A549 (cell line): ENCODE measurements at regions of chr4 and their contacts with region 1.

Region 1: GRCh38 chr4:7067452-7068278 is at the start of gene GRPEL1:
- DNase-seq: peak; percentile 83 to 98
- ATAC-seq: peak; percentile 94 to 97
- H3K4me3 ChIP-seq: peak within 1 kb of the TSS; percentile 83
- H3K27ac ChIP-seq: peak within 1 kb of the TSS; percentile 86 to 97
- H3K4me1 ChIP-seq: peaks cover 19% of the 10 kb centered on the region; the same call in 2 of the 3 replicates
- CTCF ChIP-seq: no peak
- EP300 ChIP-seq: no peak
- POLR2A ChIP-seq: peak; percentile 98
- RAD21 ChIP-seq: no peak
- polyA plus RNA-seq, gene GRPEL1: 50.9 and 72.0 TPM in 2 replicates

Region 2: DNA sequence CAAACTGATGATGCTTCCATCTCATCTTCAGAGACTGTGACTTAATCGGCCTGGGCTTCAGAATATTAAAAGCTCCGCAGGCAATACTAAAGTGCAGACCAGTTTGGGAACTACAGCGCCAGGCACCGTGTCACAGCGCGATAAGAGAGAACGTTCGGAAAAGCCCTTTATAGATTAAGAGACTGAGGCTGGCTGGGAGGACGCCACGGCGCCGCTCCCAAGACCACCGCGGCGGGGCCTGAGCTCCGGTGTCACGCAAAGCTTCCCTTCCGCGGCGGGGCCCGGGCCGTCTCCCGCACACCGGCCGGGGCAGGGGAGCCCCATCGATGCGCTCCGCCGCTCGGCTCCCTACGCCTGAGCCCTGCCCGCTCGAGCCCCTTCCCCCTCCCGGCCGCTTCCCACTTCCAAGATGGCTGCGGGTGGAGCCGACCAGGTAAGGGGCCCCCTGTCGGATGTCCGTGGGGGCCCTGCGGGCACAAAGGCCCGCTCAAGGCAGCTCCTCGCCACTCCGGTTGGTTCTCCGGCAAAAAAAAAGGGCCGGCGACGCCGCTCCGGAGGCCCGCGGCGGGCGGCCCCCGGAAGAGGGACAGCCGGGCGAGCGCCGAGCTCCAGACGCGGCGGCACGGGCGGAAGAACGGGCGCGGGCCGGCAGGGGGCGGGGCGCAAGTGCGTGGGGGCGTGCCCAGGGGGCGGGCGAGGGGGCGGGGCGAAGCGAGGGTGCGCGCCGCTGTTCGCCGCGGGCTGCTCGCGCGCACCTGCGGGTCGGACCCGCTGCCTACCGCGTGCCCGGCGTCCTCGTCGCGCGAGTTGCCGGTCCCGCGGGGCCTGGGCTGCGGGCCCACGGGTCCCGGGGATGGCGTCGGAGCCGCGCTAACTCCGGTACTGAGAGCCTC is 158.3 kb before region 1 on chr4 and contains the start of gene TBC1D14:
- CTCF ChIA-PET with region 1: interaction called, 7 read pairs
- POLR2A ChIA-PET with region 1: interaction called, 10 read pairs
- DNase-seq: peak; percentile 73 to 80
- ATAC-seq: peak; percentile 85 to 91
- H3K4me3 ChIP-seq: peak within 1 kb of the TSS; percentile 95
- H3K27ac ChIP-seq: peak within 1 kb of the TSS; percentile 98 to 99
- H3K4me1 ChIP-seq: peaks cover 27% of the 10 kb centered on the region
- CTCF ChIP-seq: no peak; the same call in 2 of the 3 replicates
- EP300 ChIP-seq: no peak
- POLR2A ChIP-seq: peak; percentile 73
- RAD21 ChIP-seq: no peak
- polyA plus RNA-seq, gene TBC1D14: 35.8 and 39.0 TPM in 2 replicates

Region 3: GRCh38 chr4:6974138-6974848 is 93.4 kb before region 1 on chr4:
- CTCF ChIA-PET with region 1: interaction called, 36 read pairs
- POLR2A ChIA-PET with region 1: interaction called, 6 read pairs
- DNase-seq: peak; percentile 72 to 82
- ATAC-seq: peak; percentile 80 to 93
- H3K4me3 ChIP-seq: no peak overlapping the region
- H3K27ac ChIP-seq: no peak overlapping the region
- H3K4me1 ChIP-seq: peaks cover 6% of the 10 kb centered on the region; the same call in 2 of the 3 replicates
- CTCF ChIP-seq: peak; percentile 57
- EP300 ChIP-seq: no peak
- POLR2A ChIP-seq: no peak
- RAD21 ChIP-seq: peak; percentile 50 to 63; a peak in 3 of 5 replicates

Region 4: GRCh38 chr4:7021930-7022658 is 45.6 kb before region 1 on chr4:
- CTCF ChIA-PET with region 1: interaction called, 10 read pairs
- POLR2A ChIA-PET with region 1: no interaction called
- DNase-seq: peak; percentile 69 to 78
- ATAC-seq: peak; percentile 93 to 95
- H3K4me3 ChIP-seq: no peak overlapping the region
- H3K27ac ChIP-seq: peak overlapping the region; percentile 71 to 93
- H3K4me1 ChIP-seq: peaks cover 37% of the 10 kb centered on the region
- CTCF ChIP-seq: no peak
- EP300 ChIP-seq: no peak
- POLR2A ChIP-seq: no peak
- RAD21 ChIP-seq: no peak

Region 5: DNA sequence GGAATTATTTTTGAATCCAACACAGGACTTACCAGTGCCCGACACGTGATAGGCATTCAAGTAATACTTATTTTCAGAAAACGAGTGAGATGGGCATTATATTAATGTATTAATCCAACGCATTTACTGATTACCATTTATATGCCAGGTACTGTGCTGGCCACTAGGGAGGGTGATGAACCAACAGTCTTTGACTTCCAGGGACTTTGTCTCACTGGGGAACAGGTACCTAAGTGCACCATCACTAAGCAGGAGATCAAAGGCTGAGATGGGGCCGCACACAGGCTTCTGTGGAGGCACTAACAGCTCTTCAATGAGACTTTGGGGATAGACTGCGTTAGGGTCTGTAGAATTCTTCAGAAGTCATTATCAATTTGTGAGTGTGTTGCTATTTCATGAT is 30.2 kb before region 1 on chr4:
- CTCF ChIA-PET with region 1: interaction called, 26 read pairs
- POLR2A ChIA-PET with region 1: interaction called, 19 read pairs
- DNase-seq: no peak
- ATAC-seq: no peak
- H3K4me3 ChIP-seq: no peak overlapping the region
- H3K27ac ChIP-seq: peak overlapping the region in 1 of 2 experiments; percentile 92; a peak in 3 of 6 replicates
- H3K4me1 ChIP-seq: peaks cover 45% of the 10 kb centered on the region
- CTCF ChIP-seq: no peak
- EP300 ChIP-seq: no peak
- POLR2A ChIP-seq: no peak
- RAD21 ChIP-seq: no peak

Region 6: DNA sequence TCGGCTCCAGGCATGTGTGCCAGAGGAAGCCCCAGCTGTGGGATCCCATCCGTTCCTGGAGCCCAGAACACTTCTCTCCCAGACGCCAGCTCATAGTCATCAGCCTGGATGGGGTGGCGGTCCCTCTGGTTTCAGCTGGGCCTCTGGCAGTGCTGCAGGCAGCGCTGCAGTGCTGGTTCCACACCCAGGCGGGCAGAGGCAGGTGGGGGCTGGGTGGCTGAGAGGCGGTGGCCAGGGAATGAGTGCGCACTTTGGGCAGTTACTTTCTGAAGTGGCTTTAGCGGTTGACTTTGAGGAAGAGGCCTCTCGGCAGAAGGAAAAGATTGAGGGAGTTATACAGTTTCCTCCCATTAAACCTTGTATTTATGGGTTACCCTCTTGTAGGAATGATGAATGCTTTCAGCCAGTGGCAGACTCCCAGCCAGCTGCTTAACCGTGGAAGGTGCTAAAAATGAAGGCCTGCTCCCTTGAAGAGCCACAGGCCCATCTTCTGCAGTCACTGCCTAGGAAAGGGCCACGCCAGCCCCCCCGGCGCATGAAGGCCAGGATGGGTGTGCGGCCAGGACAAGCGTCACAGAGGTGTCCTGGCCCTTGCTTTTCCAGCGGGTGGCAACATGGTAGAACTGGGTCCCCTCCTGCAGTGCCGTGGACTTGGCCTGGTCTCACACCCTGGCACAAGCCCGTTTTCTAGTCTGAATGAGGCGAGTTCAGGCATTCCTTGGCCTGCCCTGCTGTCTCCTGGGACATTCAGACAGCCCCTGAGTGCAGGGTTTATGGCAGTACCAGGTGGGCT is 14.5 kb before region 1 on chr4:
- CTCF ChIA-PET with region 1: interaction called, 37 read pairs
- POLR2A ChIA-PET with region 1: interaction called, 6 read pairs
- DNase-seq: no peak
- ATAC-seq: no peak
- H3K4me3 ChIP-seq: no peak overlapping the region
- H3K27ac ChIP-seq: no peak overlapping the region
- H3K4me1 ChIP-seq: no peaks in the 10 kb centered on the region
- CTCF ChIP-seq: no peak
- EP300 ChIP-seq: no peak
- POLR2A ChIP-seq: no peak
- RAD21 ChIP-seq: no peak

Region 7: GRCh38 chr4:7472442-7473013 is 404.9 kb after region 1 on chr4:
- CTCF ChIA-PET with region 1: no interaction called
- POLR2A ChIA-PET with region 1: no interaction called
- DNase-seq: no peak
- ATAC-seq: no peak
- H3K4me3 ChIP-seq: no peak overlapping the region
- H3K27ac ChIP-seq: no peak overlapping the region
- H3K4me1 ChIP-seq: no peaks in the 10 kb centered on the region
- CTCF ChIP-seq: no peak
- EP300 ChIP-seq: no peak
- POLR2A ChIP-seq: no peak
- RAD21 ChIP-seq: no peak